ENCODE measurements at regions of chr12 and their contacts with region 1.

Region 1: GRCh38 chr12:49967042-49967776 is 5.5 kb downstream of the AQP5 start:
- DNase-seq: peak; percentile 92
- H3K4me3 Mint-ChIP-seq: peak overlapping the region; percentile 43
- H3K27ac Mint-ChIP-seq: no peak overlapping the region
- H3K4me1 Mint-ChIP-seq: peaks cover 4% of the 10 kb centered on the region
- H3K27me3 Mint-ChIP-seq: peaks cover 46% of the 10 kb centered on the region

Region 2: GRCh38 chr12:49609746-49610089 is 357.5 kb before region 1 on chr12:
- CTCF ChIA-PET with region 1: no interaction called
- POLR2A ChIA-PET with region 1: no interaction called
- DNase-seq: no peak
- H3K4me3 Mint-ChIP-seq: no peak overlapping the region
- H3K27ac Mint-ChIP-seq: no peak overlapping the region
- H3K4me1 Mint-ChIP-seq: no peaks in the 10 kb centered on the region
- H3K27me3 Mint-ChIP-seq: peaks cover 19% of the 10 kb centered on the region

Region 3: GRCh38 chr12:49698619-49699545 is 268.3 kb before region 1 on chr12:
- CTCF ChIA-PET with region 1: no interaction called
- POLR2A ChIA-PET with region 1: no interaction called
- DNase-seq: peak; percentile 55
- H3K4me3 Mint-ChIP-seq: peak overlapping the region; percentile 57
- H3K27ac Mint-ChIP-seq: peak overlapping the region; percentile 77
- H3K4me1 Mint-ChIP-seq: peaks cover 44% of the 10 kb centered on the region
- H3K27me3 Mint-ChIP-seq: no peaks in the 10 kb centered on the region

Region 4: DNA sequence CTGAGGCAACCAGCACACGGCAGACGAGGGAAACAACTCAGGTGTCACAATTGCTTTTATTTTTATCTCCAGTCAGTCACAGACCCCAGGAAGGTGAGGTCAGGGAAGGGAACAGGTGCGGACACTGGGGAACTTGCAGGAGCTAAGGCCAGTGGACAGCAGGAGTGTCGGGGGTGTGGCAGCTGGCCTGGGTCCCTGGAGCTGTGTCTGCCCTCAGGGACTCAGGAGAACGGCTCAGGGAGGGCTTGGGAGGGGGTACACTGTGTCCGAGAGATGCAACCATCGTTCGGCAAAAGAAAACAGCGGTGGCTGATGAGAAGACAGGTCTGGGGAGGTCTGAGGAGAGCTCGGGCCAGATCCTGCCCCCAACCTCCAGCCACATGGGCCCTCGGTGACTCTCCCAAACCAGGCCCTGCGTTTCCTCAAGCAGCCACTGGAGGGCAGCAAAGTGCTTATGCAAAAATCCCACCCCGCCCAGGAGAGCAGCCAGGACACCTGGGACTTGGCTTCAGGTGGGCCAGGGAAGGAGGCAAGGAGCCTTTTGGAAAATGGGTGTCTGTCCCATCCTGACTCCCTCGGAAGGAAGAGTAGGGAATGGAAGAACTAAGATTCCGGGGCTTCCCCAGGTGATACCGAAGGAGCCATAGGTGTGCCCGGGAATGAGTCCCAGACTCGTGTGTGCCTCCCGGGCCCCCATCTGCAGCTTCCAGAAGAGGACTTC is 100.2 kb before region 1 on chr12:
- CTCF ChIA-PET with region 1: interaction called, 31 read pairs
- POLR2A ChIA-PET with region 1: no interaction called
- DNase-seq: peak; percentile 78
- H3K4me3 Mint-ChIP-seq: no peak overlapping the region
- H3K27ac Mint-ChIP-seq: no peak overlapping the region
- H3K4me1 Mint-ChIP-seq: no peaks in the 10 kb centered on the region
- H3K27me3 Mint-ChIP-seq: peaks cover 9% of the 10 kb centered on the region

Region 5: GRCh38 chr12:49950273-49951251 is 16.6 kb before region 1 on chr12 and contains the start of gene AQP2:
- CTCF ChIA-PET with region 1: interaction called, 86 read pairs
- POLR2A ChIA-PET with region 1: interaction called, 11 read pairs
- DNase-seq: no peak
- H3K4me3 Mint-ChIP-seq: no peak within 1 kb of the TSS
- H3K27ac Mint-ChIP-seq: no peak within 1 kb of the TSS
- H3K4me1 Mint-ChIP-seq: peaks cover 11% of the 10 kb centered on the region
- H3K27me3 Mint-ChIP-seq: peaks cover 25% of the 10 kb centered on the region
- total RNA-seq, gene AQP2: not detected

Region 6: DNA sequence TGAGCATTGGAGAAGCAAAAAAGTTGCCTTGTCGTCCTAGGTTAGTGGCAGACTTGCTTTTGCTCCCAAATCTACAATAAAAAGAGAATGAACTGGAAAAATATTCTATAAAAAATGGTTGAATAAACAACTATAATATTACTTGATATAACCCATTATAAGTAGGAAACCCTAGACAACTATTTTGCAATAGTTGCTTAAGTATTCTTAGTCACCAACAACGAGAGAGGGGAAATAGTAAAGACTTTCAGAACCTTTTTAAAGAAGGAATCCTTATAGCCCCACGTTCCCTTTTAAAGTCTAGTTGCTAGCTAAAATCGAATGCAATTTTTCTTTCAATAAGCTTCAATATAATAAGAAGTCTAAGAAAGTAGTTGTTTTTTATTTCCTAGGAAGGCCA is 23.1 kb after region 1 on chr12:
- CTCF ChIA-PET with region 1: interaction called, 101 read pairs
- POLR2A ChIA-PET with region 1: interaction called, 4 read pairs
- DNase-seq: no peak
- H3K4me3 Mint-ChIP-seq: no peak overlapping the region
- H3K27ac Mint-ChIP-seq: no peak overlapping the region
- H3K4me1 Mint-ChIP-seq: no peaks in the 10 kb centered on the region
- H3K27me3 Mint-ChIP-seq: no peaks in the 10 kb centered on the region

Region 7: GRCh38 chr12:50016501-50017475 is 49.6 kb after region 1 on chr12:
- CTCF ChIA-PET with region 1: interaction called, 12 read pairs
- POLR2A ChIA-PET with region 1: no interaction called
- DNase-seq: no peak
- H3K4me3 Mint-ChIP-seq: no peak overlapping the region
- H3K27ac Mint-ChIP-seq: no peak overlapping the region
- H3K4me1 Mint-ChIP-seq: peaks cover 42% of the 10 kb centered on the region
- H3K27me3 Mint-ChIP-seq: no peaks in the 10 kb centered on the region

Region 8: DNA sequence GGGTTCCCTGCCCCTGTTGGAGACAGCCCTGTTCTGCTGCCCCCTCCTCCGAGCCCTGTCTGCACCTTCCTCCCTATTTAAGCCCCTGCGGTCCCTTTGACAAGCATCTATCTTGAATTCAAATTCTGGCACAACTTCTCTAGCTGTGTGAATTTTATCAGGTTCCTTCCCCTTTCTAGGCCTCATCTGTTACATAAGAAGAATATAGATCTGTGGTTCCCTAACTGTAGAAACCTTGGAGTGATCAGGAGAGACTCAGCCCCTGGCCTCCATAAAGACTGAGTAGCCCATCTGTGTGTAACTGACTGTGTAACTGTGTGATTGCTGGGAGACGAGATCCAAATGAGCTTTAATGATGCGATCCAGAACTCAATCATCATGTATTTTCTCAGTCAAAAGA is 71.1 kb after region 1 on chr12:
- CTCF ChIA-PET with region 1: interaction called, 30 read pairs
- POLR2A ChIA-PET with region 1: no interaction called
- DNase-seq: no peak
- H3K4me3 Mint-ChIP-seq: no peak overlapping the region
- H3K27ac Mint-ChIP-seq: no peak overlapping the region
- H3K4me1 Mint-ChIP-seq: peaks cover 4% of the 10 kb centered on the region
- H3K27me3 Mint-ChIP-seq: peaks cover 12% of the 10 kb centered on the region

Region 9: DNA sequence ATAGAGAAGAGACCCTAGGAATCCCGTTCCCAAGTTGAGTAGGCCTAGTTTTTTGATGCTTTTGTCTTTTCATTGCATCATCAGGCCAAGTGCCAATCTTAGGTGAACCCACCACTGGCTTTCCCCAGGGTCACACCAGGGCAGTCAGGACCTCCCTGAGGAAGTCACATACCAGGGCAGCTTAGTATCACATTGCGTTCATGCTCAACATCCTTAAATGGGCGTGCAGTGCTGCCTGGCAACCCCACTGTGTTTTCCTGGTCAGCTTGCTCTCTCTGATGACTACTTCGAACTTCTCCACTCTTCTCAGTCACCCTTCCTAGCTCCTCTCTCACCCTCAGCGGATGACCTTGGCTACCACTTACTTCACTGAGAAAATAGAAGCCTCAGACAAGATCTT is 99.2 kb after region 1 on chr12:
- CTCF ChIA-PET with region 1: interaction called, 82 read pairs
- POLR2A ChIA-PET with region 1: interaction called, 3 read pairs
- DNase-seq: no peak
- H3K4me3 Mint-ChIP-seq: no peak overlapping the region
- H3K27ac Mint-ChIP-seq: no peak overlapping the region
- H3K4me1 Mint-ChIP-seq: peaks cover 6% of the 10 kb centered on the region
- H3K27me3 Mint-ChIP-seq: peaks cover 11% of the 10 kb centered on the region

Region 10: GRCh38 chr12:50425589-50426258 is 458.5 kb after region 1 on chr12:
- CTCF ChIA-PET with region 1: no interaction called
- POLR2A ChIA-PET with region 1: no interaction called
- DNase-seq: no peak
- H3K4me3 Mint-ChIP-seq: no peak overlapping the region
- H3K27ac Mint-ChIP-seq: peak overlapping the region; percentile 3
- H3K4me1 Mint-ChIP-seq: peaks cover 11% of the 10 kb centered on the region
- H3K27me3 Mint-ChIP-seq: no peaks in the 10 kb centered on the region

Measured in activated CD4-positive, alpha-beta memory T cell treated with anti-CD3 and anti-CD28 coated beads, Interleukin-2, amount 10 ng/mL, durations not matched to agents 7 days and 5 days (primary cell).